Natural killer cell (primary cell): ENCODE measurements at regions of chr7 and their contacts with region 1.

Region 1: DNA sequence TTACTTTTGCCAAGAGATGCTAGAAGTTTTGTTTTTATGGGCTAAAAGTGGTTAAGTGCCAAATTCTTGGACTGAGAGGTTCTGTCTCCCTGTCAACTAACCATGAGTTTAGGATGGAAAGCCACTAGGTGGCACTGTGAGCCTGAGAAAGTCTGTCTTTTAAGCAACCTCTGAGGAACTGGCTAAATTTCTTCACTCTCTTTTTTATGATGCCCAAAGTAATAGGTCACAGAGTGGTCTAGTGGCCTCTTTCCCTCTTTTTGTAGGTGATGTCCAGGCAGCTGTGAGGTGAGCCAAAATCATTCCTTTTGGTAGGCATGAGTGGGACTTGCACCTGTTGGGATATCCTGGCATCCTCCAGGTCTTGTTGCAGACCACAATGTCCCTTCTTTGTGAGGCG is 56.8 kb downstream of the SND1 start:
- DNase-seq: peak; percentile 57 to 86
- ATAC-seq: peak; percentile 80 to 91 (median 85)
- H3K4me3 ChIP-seq: no peak overlapping the region
- H3K4me3 Mint-ChIP-seq: no peak overlapping the region
- H3K27ac ChIP-seq: no peak overlapping the region
- H3K27ac Mint-ChIP-seq: no peak overlapping the region
- H3K4me1 ChIP-seq: no peaks in the 10 kb centered on the region
- H3K4me1 Mint-ChIP-seq: peaks cover 7 to 8% of the 10 kb centered on the region in 2 donors
- H3K27me3 ChIP-seq: no peaks in the 10 kb centered on the region
- H3K27me3 Mint-ChIP-seq: no peaks in the 10 kb centered on the region
- CTCF ChIP-seq: peak; percentile 84

Region 2: DNA sequence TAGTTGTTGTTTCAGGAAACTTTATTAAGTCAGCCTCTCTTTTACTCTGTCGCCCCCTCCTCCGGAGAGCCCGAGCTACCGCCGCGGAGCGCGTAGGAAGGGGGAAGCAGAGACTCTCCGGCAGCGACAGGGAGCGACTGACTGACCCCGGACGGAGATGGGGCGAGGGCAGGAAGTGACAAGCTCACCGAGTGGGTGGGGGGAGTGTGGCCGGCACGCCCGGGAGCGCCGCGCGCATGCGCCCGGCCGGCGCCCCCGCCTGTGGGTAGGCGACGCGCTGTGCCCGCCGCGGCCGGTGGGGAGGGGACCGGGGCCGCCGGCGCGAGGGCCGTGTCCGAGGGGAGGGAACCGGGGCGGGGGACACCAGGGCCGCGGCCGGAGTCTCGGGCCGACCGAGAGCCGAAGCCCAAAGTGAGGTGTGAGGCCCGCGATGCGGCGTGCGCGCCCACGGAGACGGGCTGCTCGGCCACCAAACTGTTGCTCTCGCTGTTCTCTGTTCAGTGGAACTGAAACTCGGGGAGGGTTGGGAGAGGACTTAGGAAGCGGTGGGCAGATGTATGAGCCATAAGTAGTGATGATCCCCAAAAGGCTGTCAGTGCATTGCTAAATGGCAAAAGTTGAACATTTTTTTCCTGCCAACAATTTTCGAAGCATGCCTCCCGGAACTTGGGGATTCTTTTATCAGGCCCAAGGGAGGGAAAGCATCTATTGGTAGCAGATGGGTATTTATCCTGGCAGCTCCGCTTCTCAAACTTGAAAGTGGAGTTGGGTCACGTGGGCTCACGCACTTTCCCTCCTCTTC is 316.0 kb before region 1 on chr7 and contains the start of gene ZNF800:
- intact Hi-C with region 1: no loop called
- DNase-seq: peak; percentile 85 to 93
- ATAC-seq: peak; percentile 80 to 93 (median 85)
- H3K4me3 ChIP-seq: peak within 1 kb of the TSS; percentile 88
- H3K4me3 Mint-ChIP-seq: peak within 1 kb of the TSS; percentile 98
- H3K27ac ChIP-seq: peak within 1 kb of the TSS; percentile 96
- H3K27ac Mint-ChIP-seq: peak within 1 kb of the TSS; percentile 96 to 97
- H3K4me1 ChIP-seq: peaks cover 15% of the 10 kb centered on the region
- H3K4me1 Mint-ChIP-seq: peaks cover 43 to 56% of the 10 kb centered on the region in 2 donors
- H3K27me3 ChIP-seq: no peaks in the 10 kb centered on the region
- H3K27me3 Mint-ChIP-seq: no peaks in the 10 kb centered on the region
- CTCF ChIP-seq: no peak
- total RNA-seq, gene ZNF800: 93.3 to 107 (median 101) TPM

Region 3: DNA sequence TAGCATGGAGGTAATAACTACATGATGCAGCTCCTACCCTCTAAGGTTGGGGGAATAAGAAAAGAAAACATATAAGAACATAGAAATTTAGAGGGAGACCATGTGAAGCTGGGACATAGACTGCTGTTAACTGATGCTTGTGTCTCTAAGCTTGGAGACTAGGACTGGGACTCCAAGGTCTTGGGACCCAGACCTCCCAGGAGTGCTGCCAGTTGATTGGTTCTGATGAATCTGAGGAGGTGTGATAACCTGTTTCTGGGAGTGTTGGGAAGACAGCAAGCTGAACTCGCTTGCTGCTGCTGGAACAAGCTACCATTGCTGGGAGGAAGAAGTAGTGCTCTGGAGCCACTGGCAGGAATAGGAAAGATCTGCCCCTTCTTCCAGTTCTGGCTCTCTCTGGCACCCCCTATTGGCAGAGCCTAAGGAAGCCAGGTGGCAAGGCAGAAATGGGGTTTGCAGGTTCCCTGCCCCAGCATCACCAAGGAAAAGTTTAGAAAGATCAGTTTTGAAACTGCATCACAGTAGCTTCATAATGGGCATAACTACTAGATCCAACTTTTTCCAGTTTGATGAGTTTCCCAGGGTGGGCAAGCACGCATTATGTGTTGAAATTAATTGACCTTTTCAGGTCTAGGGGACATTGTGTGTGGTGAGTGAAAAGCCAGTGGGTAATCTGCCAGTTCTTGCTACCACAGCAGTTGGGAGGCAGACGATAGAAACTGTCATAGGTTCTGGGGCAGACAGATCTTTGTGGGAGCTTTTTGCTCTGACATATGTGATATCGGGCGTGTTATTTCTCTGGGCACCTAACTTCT is 83.9 kb after region 1 on chr7:
- intact Hi-C with region 1: loop called (anchors 1 kb)
- DNase-seq: peak; percentile 29 to 55
- ATAC-seq: peak; percentile 64 to 72 (median 65)
- H3K4me3 ChIP-seq: no peak overlapping the region
- H3K4me3 Mint-ChIP-seq: no peak overlapping the region
- H3K27ac ChIP-seq: no peak overlapping the region
- H3K27ac Mint-ChIP-seq: peak overlapping the region in 1 of 2 donors; percentile 11
- H3K4me1 ChIP-seq: peaks cover 8% of the 10 kb centered on the region
- H3K4me1 Mint-ChIP-seq: peaks cover 36 to 48% of the 10 kb centered on the region in 2 donors
- H3K27me3 ChIP-seq: no peaks in the 10 kb centered on the region
- H3K27me3 Mint-ChIP-seq: no peaks in the 10 kb centered on the region
- CTCF ChIP-seq: peak; percentile 77

Region 4: DNA sequence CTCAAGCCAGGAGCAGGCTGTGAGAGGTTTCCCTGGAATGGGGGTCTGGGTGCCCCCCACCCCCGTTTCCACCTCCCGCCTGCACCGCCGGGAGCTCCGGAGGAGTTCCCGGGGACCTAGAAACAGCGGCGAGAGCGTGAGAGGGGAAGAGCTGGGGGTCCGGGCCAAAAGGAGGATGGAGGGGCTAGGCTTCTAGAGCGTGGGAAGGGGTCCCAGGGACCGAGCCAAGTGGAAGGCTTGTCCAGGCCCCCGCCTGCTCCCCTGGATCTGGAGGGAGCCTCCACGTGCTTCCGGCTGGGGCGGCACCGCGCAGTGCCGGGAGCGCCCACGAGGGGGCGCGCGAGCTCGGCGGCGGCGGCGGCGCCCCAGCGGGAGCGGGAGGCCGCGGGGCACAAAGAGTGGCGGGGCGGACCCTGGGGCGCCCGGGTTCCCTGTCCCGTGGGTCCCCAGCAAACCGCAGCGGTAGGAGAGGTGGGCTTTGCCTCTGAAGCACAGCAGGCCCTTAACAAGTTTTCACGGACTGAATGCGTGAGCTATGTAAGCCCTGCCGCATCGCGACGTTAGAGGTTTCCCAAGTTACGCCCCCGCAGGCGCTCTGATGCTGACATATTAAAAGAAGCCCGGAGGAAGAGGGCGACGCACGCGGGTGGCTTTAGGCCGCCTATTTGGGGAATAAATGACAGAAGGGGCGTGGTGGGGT is 426.9 kb after region 1 on chr7:
- intact Hi-C with region 1: loop called (anchors 1 kb)
- DNase-seq: peak; percentile 69 to 76
- ATAC-seq: peak; percentile 95 to 97 (median 96)
- H3K4me3 ChIP-seq: peak overlapping the region; percentile 55
- H3K4me3 Mint-ChIP-seq: peak overlapping the region; percentile 78
- H3K27ac ChIP-seq: no peak overlapping the region
- H3K27ac Mint-ChIP-seq: no peak overlapping the region
- H3K4me1 ChIP-seq: peaks cover 20% of the 10 kb centered on the region
- H3K4me1 Mint-ChIP-seq: peaks cover 12 to 18% of the 10 kb centered on the region in 2 donors
- H3K27me3 ChIP-seq: peaks cover 32% of the 10 kb centered on the region
- H3K27me3 Mint-ChIP-seq: peaks cover 51 to 63% of the 10 kb centered on the region in 2 donors
- CTCF ChIP-seq: peak; percentile 92

Region 5: DNA sequence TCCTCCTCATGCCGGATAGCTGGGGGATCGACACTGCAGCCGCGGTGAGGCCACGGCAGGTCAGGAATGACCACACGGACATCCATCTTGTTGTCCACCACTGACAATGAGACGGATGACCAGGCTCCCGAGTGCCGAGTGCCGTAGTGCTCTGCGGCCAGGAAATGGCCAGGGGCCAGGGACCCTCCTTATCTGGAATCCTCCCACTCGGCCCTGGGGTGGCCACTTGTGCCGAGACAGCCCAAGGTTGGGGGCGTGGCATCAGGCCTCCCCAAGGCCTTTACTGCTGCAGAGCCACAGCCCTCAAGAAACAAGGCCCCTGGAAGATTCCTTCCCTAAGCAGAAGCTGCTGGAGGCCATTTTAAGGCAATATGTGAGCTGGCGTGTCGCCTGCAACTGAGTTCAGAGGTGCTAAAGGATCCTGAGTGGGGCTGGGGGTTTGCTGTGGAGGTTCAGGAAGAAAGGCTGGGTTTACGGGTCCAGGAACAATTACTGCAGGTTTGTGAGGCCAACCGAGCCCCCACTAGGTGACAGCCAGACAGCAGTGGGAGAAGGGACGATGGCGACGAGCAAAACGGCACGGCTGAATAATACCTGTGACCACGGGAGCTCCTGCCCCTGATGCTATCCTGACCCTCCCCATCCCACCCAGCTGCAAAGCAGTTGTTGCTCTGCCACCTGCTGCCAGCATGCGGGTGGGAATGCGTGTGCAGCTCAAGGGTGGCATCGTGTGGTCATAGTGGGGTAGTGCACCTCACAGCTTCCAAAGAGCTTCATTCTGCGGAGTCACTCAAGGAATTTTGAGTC is 500.6 kb after region 1 on chr7:
- intact Hi-C with region 1: loop called (anchors 1 kb)
- DNase-seq: peak; percentile 57 to 89
- ATAC-seq: peak; percentile 94 to 100 (median 99)
- H3K4me3 ChIP-seq: no peak overlapping the region
- H3K4me3 Mint-ChIP-seq: no peak overlapping the region
- H3K27ac ChIP-seq: no peak overlapping the region
- H3K27ac Mint-ChIP-seq: no peak overlapping the region
- H3K4me1 ChIP-seq: peaks cover 7% of the 10 kb centered on the region
- H3K4me1 Mint-ChIP-seq: peaks cover 5% of the 10 kb centered on the region in 2 donors
- H3K27me3 ChIP-seq: peaks cover 3% of the 10 kb centered on the region
- H3K27me3 Mint-ChIP-seq: peaks cover 0 to 18% of the 10 kb centered on the region in 2 donors
- CTCF ChIP-seq: peak; percentile 89

Region 6: DNA sequence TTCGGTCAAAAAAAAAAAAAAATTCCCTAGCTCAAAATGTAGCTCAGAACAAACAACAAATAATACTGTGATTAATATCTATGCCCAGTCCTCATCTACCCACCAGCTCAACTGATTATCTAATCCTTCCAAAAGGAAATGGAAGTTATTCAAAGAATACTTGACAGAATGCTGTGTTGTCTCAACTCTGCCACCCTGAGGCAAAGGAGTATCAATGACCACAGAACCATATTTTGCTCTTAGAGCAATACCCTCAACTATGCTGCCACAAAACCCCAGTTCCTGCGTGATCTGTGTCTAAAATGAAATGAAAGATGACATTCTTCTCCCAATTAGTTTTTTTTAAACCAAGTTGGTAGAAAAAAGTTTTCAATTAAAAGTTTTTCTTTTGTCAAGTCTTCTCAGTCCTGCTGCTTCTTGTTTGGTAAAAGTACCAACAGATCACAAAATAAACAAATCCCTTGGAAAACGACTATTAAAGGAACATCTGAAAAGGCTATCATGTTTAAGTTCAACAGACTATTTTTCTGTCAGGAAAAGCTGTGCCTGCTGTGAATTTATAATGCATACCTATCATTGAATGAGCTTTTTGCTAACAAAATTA is 613.4 kb after region 1 on chr7:
- intact Hi-C with region 1: loop called (anchors 2 kb)
- DNase-seq: peak in 1 of 2 donors; percentile 67
- ATAC-seq: peak; percentile 50 to 71 (median 67)
- H3K4me3 ChIP-seq: no peak overlapping the region
- H3K4me3 Mint-ChIP-seq: peak overlapping the region; percentile 78
- H3K27ac ChIP-seq: peak overlapping the region; percentile 72
- H3K27ac Mint-ChIP-seq: peak overlapping the region; percentile 87 to 95
- H3K4me1 ChIP-seq: peaks cover 24% of the 10 kb centered on the region
- H3K4me1 Mint-ChIP-seq: peaks cover 44 to 47% of the 10 kb centered on the region in 2 donors
- H3K27me3 ChIP-seq: no peaks in the 10 kb centered on the region
- H3K27me3 Mint-ChIP-seq: no peaks in the 10 kb centered on the region
- CTCF ChIP-seq: peak; percentile 47

Region 7: GRCh38 chr7:128387216-128388144 is 678.7 kb after region 1 on chr7:
- intact Hi-C with region 1: loop called (anchors 1 kb)
- DNase-seq: peak; percentile 58 to 83
- ATAC-seq: peak; percentile 83 to 96 (median 94)
- H3K4me3 ChIP-seq: no peak overlapping the region
- H3K4me3 Mint-ChIP-seq: no peak overlapping the region
- H3K27ac ChIP-seq: no peak overlapping the region
- H3K27ac Mint-ChIP-seq: no peak overlapping the region
- H3K4me1 ChIP-seq: peaks cover 6% of the 10 kb centered on the region
- H3K4me1 Mint-ChIP-seq: peaks cover 0 to 14% of the 10 kb centered on the region in 2 donors
- H3K27me3 ChIP-seq: no peaks in the 10 kb centered on the region
- H3K27me3 Mint-ChIP-seq: no peaks in the 10 kb centered on the region
- CTCF ChIP-seq: peak; percentile 83